H1 (cell line): ENCODE measurements at regions of chr1 and their contacts with region 1.

Region 1: DNA sequence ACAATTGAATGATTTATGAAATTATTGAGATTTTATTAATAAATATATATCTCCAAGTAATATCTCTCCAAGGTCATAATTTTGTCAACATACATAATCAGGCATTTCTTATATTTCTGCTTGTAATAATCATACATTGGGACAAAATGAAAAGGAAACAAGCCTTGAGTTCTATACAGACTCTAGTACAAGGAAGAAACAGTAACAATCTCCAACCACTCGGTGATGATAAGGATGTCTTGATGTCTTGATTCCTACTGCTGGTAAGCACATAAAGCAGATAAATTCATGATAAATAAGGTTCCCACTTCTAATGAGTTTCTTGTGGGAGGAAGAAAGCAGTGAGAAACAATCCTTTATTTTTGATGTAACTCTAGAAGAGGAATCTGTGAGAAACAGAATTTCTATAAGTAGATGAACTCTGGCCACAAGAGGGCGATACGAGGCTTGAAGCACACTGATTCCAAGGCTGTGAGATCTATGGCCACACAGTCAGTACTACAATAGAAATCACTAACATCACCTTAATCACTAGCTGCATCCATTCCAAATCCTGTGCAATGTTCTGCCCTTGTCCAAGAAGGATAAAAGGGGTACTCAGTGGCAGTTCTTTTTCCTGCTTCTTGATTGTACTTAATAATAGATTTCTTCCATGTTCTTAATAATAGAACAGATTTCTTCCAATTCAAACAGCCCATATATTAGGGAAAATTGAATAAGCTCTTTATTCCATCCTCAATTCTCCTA is 41.4 kb upstream of the LRRC8B start:
- DNase-seq: peak; percentile 3 to 77
- H3K4me3 ChIP-seq: no peak overlapping the region
- H3K27ac ChIP-seq: no peak overlapping the region
- H3K4me1 ChIP-seq: no peaks in the 10 kb centered on the region
- H3K27me3 ChIP-seq: no peaks in the 10 kb centered on the region
- CTCF ChIP-seq: peak in 2 of 3 experiments; percentile 63 to 74; a peak in 3 of 4 replicates
- EP300 ChIP-seq: no peak
- POLR2A ChIP-seq: no peak
- RAD21 ChIP-seq: peak; percentile 74 to 77

Region 2: DNA sequence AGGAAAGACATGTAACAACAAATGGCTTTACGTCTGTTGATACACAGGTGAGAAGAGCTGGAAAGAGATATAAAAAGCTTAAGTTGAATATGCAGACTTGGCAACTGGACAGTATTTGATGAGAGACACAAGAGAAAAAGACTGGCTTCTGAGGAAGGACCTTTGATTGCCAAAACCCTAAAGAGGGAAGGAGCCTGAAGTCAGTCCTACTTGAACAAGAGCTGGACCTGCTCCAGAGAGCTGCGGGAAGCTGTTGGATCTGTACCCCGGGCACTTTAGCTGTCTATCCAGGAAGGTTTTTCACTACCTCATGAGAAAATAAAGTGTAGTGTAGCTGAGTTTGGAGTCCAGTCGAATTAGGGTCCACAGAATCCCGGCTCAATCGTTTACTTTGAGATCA is 16.1 kb after region 1 on chr1:
- CTCF ChIA-PET with region 1: interaction called, 23 read pairs
- POLR2A ChIA-PET with region 1: no interaction called
- DNase-seq: no peak
- H3K4me3 ChIP-seq: no peak overlapping the region
- H3K27ac ChIP-seq: no peak overlapping the region
- H3K4me1 ChIP-seq: no peaks in the 10 kb centered on the region
- H3K27me3 ChIP-seq: no peaks in the 10 kb centered on the region
- CTCF ChIP-seq: no peak
- EP300 ChIP-seq: no peak
- POLR2A ChIP-seq: no peak
- RAD21 ChIP-seq: no peak

Region 3: GRCh38 chr1:89545264-89546038 is 62.3 kb after region 1 on chr1:
- CTCF ChIA-PET with region 1: no interaction called
- POLR2A ChIA-PET with region 1: no interaction called
- DNase-seq: no peak
- H3K4me3 ChIP-seq: no peak overlapping the region
- H3K27ac ChIP-seq: no peak overlapping the region
- H3K4me1 ChIP-seq: no peaks in the 10 kb centered on the region
- H3K27me3 ChIP-seq: no peaks in the 10 kb centered on the region
- CTCF ChIP-seq: no peak
- EP300 ChIP-seq: no peak
- POLR2A ChIP-seq: no peak
- RAD21 ChIP-seq: no peak

Region 4: GRCh38 chr1:89598450-89599331 is 115.5 kb after region 1 on chr1:
- CTCF ChIA-PET with region 1: interaction called, 28 read pairs
- POLR2A ChIA-PET with region 1: no interaction called
- DNase-seq: peak in 1 of 2 experiments; percentile 52
- H3K4me3 ChIP-seq: peak overlapping the region in 1 of 4 experiments; percentile 36; a peak in 2 of 8 replicates
- H3K27ac ChIP-seq: peak overlapping the region; percentile 39; the same call in 1 of the 2 replicates
- H3K4me1 ChIP-seq: peaks cover 2 to 16% (median 10%) of the 10 kb centered on the region in 4 experiments; a peak in 6 of 7 replicates
- H3K27me3 ChIP-seq: no peaks in the 10 kb centered on the region; a peak in 1 of 7 replicates
- CTCF ChIP-seq: peak in 2 of 3 experiments; percentile 36 to 52; a peak in 2 of 4 replicates
- EP300 ChIP-seq: no peak
- POLR2A ChIP-seq: no peak
- RAD21 ChIP-seq: peak; percentile 51 to 52

Region 5: DNA sequence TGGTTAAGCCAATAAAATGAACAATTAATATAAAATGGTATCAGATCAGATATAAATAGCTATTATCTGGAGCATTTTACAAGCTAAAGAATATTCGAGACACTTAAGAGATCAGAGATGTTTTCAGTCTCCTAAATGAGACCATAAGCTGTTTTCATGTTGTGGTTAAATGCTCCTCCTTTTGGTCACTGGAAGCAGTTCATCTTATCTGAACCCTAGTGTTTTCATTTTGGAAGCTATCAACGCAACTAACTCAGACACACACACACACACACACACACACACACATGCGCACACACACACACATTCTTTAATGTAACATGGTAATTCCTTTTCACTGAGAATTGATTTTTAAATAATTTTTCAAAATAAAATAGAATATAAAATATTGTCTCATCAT is 139.7 kb after region 1 on chr1:
- CTCF ChIA-PET with region 1: interaction called, 23 read pairs
- POLR2A ChIA-PET with region 1: no interaction called
- DNase-seq: no peak
- H3K4me3 ChIP-seq: no peak overlapping the region
- H3K27ac ChIP-seq: no peak overlapping the region
- H3K4me1 ChIP-seq: no peaks in the 10 kb centered on the region
- H3K27me3 ChIP-seq: no peaks in the 10 kb centered on the region; a peak in 1 of 7 replicates
- CTCF ChIP-seq: peak in 2 of 3 experiments; percentile 20 to 28; a peak in 2 of 4 replicates
- EP300 ChIP-seq: no peak
- POLR2A ChIP-seq: no peak
- RAD21 ChIP-seq: peak; percentile 43 to 52